HEK293T (cell line): ENCODE measurements at regions of chr5 and their contacts with region 1.

Region 1: DNA sequence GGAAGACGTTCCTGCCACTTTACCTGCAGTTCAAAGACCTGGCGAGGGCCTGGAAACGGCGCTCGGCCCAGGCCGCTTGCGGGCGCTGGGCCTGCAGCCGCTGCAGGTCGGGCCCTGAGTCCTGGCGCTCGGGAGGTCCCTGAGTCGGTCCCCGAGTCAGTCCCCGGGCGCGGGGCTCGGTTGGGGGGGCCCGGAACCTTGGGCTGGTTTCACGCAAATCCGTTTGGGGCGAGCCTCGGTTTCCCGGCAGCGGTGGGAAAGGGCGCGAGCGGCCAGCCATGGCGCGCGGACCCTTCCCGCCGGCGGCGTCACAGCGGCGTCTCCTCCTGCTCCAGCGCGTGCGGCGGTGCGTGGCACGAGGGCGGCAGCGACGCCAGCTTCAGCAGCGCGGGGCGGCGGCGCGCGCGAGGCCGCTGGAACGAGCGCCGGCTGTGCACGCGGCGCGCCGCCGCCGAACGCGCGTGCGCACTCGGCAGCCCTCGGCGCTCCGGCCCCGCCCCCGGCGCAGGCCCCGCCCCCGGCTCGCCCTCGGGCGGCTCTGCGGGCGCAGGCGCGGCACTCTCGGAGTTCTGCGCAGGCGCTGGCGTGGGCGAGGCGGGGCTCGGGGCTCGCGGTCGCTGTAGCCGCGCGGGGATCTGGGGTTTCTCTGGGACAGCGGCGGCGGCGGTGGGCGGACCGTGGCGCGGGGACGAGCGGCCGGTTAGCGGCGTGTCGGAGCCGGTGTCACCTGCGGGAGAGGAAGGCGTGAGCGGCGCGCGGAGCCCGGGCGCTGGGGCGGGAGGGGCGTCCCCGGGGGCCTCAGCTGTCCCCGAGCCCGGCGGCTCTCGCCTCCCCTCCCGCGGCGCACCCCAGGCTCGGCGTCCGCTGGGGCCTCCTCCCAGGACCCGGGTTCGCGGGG is 29.9 kb downstream of the EXOC3 start:
- DNase-seq: peak; percentile 99

Region 2: DNA sequence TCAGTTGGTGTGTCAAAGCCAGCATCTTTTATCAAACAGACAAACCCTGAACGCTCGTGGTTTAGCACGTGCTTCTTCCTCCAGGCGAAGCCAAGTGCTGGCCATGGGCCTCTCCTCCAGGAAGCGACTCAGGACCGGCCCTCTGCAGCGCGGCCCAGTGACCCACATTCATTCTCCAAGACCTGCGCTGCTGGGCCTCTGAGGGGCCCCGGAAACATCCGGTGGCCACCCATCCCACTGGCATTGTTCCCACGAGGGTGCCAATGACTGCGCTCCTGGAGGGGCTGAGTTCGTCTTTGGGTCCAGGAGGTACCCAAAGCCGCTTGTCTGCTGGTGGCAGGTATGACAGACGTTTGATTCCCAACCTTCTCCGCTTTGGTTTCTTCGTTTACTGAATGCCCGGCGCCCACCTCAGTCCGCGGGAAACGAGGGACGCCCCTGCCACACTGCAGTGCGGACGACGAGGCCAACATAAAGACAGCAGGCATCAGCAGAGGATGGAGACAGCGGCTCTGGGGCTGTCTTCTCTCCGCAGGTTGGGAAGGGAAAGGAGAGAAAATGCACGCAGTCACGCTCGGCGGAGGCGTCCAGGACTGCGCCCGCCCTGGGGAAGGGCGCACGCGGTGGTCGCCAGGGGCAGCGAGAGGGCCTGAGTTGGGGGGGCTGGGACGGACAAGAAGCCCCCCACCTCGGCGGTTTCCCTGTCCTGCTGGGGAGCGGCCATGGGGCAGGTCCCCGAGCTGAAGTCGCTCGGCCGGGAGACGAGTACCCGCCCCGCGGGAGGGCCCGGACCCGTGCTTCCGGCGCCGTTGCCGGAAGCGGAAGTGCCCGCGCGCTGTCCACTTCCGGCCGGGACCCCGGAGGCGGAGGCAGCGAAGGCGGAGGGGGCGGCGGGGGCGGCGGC is 30.3 kb before region 1 on chr5 and contains the start of gene EXOC3:
- CTCF ChIA-PET with region 1: interaction called, 8 read pairs
- POLR2A ChIA-PET with region 1: interaction called, 14 read pairs
- DNase-seq: peak; percentile 94

Region 3: GRCh38 chr5:454936-455335 is 18.0 kb before region 1 on chr5:
- CTCF ChIA-PET with region 1: no interaction called
- POLR2A ChIA-PET with region 1: no interaction called
- DNase-seq: no peak

Region 4: GRCh38 chr5:612498-613424 is 139.9 kb after region 1 on chr5:
- CTCF ChIA-PET with region 1: no interaction called
- POLR2A ChIA-PET with region 1: interaction called, 17 read pairs
- DNase-seq: peak; percentile 45